Activated naive CD8-positive, alpha-beta T cell treated with anti-CD3 and anti-CD28 coated beads, Interleukin-2, amount 10 ng/mL, durations not matched to agents 7 days and 5 days (primary cell): ENCODE measurements at regions of chrX and their contacts with region 1.

Region 1: DNA sequence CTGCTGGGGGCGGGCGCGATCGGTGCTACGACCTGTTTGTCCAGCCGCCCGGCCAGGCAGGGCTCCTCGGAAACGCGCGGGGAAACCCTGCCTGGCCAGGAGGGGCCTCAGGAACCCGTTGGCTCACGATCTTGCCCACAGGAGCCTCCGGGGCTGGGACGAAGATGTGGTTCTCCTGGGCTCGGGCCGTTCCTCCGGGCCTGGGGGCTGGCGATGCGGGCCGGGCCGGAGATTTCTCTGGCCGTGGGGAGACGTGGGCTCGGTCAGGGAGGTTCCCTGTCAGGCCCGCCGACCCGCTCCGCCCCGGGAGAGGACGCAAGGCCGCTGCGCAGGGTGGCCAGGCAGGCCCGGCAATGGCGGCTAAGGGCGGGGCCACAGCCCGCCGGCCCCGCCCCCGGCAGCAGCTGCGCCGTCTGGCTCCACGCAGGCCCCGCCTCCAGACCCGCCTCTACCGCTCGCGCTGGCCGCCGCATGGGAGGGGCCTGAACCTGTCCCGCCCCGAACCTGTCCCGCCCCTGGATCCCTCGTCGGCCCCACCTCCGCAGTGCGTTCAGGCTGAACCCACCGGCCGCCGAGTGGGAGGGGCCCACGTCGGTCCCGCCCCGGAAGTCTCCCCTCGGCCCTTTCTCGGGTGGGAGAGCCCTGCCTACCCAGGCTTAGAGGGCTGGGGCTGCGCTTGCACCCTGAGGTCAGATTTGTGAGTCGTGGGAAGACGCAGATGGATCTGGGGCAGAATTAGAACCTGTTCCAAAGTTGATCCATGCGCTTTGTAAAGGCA is at the start of gene FAM3A:
- DNase-seq: peak; percentile 93
- ATAC-seq: peak; percentile 86
- H3K4me3 Mint-ChIP-seq: peak within 1 kb of the TSS; percentile 86
- H3K27ac Mint-ChIP-seq: peak within 1 kb of the TSS; percentile 92
- H3K4me1 Mint-ChIP-seq: peaks cover 22% of the 10 kb centered on the region
- H3K27me3 Mint-ChIP-seq: no peaks in the 10 kb centered on the region
- total RNA-seq, gene FAM3A: 42.3 to 45.4 TPM

Region 2: DNA sequence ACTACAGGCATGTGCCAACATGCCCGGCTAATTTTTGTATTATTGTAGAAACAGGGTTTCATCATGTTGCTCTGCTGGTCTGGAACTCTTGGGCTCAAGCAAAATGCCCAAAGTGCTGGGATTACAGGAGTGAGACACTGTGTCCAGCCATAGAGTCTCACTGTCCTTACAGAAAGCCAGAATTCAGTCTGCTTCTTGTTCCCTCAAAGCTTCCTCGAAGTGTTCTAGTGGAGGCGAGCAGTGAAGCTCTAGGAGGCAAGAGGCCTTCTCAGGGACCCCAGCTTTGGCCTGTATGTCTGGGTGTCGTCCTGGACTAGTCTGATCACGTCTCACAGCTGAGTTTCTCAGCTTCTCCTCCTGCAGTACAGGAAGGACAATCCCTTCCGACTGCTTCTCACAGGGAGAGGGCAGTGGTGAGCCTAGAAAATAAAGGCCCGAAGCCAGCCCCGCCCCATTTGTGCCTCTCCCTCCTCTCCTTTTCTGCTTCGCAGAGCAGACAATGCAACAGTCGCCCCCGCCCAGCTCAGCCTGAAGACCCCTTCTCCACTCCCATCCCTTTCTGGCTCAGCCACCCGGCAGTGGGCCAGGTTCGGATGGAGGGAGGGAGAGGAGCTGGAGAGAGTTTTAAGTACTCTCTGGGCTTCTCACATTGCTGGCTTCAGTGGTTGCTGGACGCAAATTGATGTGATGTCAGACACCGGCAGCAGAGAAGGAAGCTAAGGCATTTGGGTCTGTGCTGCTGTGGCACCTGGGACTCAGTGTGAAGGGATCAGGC is 11.0 kb after region 1 on chrX:
- POLR2A ChIA-PET with region 1: interaction called, 15 read pairs
- DNase-seq: peak; percentile 65
- ATAC-seq: peak; percentile 88
- H3K4me3 Mint-ChIP-seq: peak overlapping the region; percentile 19
- H3K27ac Mint-ChIP-seq: peak overlapping the region; percentile 77
- H3K4me1 Mint-ChIP-seq: peaks cover 14% of the 10 kb centered on the region
- H3K27me3 Mint-ChIP-seq: no peaks in the 10 kb centered on the region